ENCODE measurements at regions of chr1 and their contacts with region 1.

Region 1: GRCh38 chr1:15323351-15323988 is 76.4 kb downstream of the FHAD1 start:
- DNase-seq: peak; percentile 72 to 80
- ATAC-seq: peak; percentile 80 to 85 (median 80)
- H3K4me3 ChIP-seq: no peak overlapping the region
- H3K27ac ChIP-seq: no peak overlapping the region
- H3K4me1 ChIP-seq: no peaks in the 10 kb centered on the region
- H3K27me3 ChIP-seq: peaks cover 0 to 8% (median 4%) of the 10 kb centered on the region in 3 donors
- CTCF ChIP-seq: peak; percentile 97

Region 2: GRCh38 chr1:14875524-14876509 is 447.7 kb before region 1 on chr1:
- intact Hi-C with region 1: no loop called
- DNase-seq: no peak
- ATAC-seq: no peak
- H3K4me3 ChIP-seq: no peak overlapping the region
- H3K27ac ChIP-seq: no peak overlapping the region
- H3K4me1 ChIP-seq: no peaks in the 10 kb centered on the region
- H3K27me3 ChIP-seq: peaks cover 0 to 9% (median 0%) of the 10 kb centered on the region in 3 donors
- CTCF ChIP-seq: no peak

Region 3: DNA sequence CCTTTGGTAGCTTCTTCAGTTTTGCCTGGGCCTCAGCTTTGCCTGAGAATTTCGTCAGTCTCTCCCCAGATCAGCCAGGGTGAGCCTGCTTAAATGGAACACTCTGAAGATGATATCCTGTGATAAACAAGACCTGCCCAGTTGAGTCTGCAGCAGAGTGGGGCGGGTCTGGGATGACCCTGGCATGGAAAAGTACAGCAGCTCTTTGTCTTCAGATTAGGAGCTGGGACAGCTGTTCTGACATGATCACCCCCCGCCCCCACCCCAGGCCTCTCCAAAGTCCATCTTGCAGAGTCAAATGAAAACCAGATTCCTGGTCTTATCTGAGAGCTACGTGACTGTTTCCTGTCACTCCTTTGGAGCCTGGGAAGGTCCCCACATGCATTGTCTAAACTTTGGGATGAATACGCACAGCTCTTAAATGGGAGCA is 172.1 kb before region 1 on chr1:
- intact Hi-C with region 1: no loop called
- DNase-seq: no peak
- ATAC-seq: no peak
- H3K4me3 ChIP-seq: no peak overlapping the region
- H3K27ac ChIP-seq: no peak overlapping the region
- H3K4me1 ChIP-seq: no peaks in the 10 kb centered on the region
- H3K27me3 ChIP-seq: peaks cover 0 to 52% (median 9%) of the 10 kb centered on the region in 3 donors
- CTCF ChIP-seq: no peak

Region 4: DNA sequence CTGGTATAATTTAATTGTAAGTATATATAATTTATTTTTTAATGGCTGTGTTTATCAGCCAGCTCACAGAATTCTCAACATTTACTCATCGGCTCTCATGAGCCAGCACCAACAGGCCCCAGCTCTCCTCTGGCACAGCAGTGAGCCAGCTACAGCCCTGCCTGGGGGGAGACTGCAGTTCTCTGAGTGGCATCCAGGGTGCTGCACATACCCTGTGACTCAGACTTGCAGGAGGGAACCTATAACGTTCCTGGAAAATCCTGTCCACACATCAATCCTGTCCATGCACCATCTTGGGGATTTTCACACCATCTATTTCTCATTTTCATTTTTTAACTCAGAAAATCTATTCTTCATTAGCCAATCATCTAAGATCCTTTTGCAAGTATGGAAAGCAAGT is 39.9 kb before region 1 on chr1:
- intact Hi-C with region 1: no loop called
- DNase-seq: no peak
- ATAC-seq: no peak
- H3K4me3 ChIP-seq: no peak overlapping the region
- H3K27ac ChIP-seq: no peak overlapping the region
- H3K4me1 ChIP-seq: no peaks in the 10 kb centered on the region
- H3K27me3 ChIP-seq: peaks cover 0 to 17% (median 0%) of the 10 kb centered on the region in 3 donors
- CTCF ChIP-seq: no peak

Region 5: GRCh38 chr1:15430787-15431570 is 107.5 kb after region 1 on chr1:
- intact Hi-C with region 1: loop called (anchors 1 to 2 kb)
- DNase-seq: peak; percentile 63 to 82
- ATAC-seq: peak; percentile 75 to 80 (median 78)
- H3K4me3 ChIP-seq: no peak overlapping the region
- H3K27ac ChIP-seq: no peak overlapping the region
- H3K4me1 ChIP-seq: no peaks in the 10 kb centered on the region
- H3K27me3 ChIP-seq: no peaks in the 10 kb centered on the region
- CTCF ChIP-seq: peak; percentile 97

Region 6: GRCh38 chr1:15501208-15502032 is 177.9 kb after region 1 on chr1:
- intact Hi-C with region 1: loop called in 1 of 2 experiments (anchors 10 kb)
- DNase-seq: peak; percentile 57 to 69
- ATAC-seq: peak; percentile 73 to 83 (median 81)
- H3K4me3 ChIP-seq: no peak overlapping the region
- H3K27ac ChIP-seq: no peak overlapping the region
- H3K4me1 ChIP-seq: no peaks in the 10 kb centered on the region
- H3K27me3 ChIP-seq: no peaks in the 10 kb centered on the region
- CTCF ChIP-seq: peak; percentile 67

Measured in psoas muscle (tissue), 8 donors.